Activated CD4-positive, alpha-beta memory T cell treated with anti-CD3 and anti-CD28 coated beads, Interleukin-2, amount 10 ng/mL, durations not matched to agents 7 days and 5 days (primary cell): ENCODE measurements at regions of chr19 and their contacts with region 1.

Region 1: GRCh38 chr19:13952154-13953035 is at the start of gene DCAF15:
- DNase-seq: peak; percentile 99
- H3K4me3 Mint-ChIP-seq: peak within 1 kb of the TSS; percentile 95
- H3K27ac Mint-ChIP-seq: peak within 1 kb of the TSS; percentile 85
- H3K4me1 Mint-ChIP-seq: peaks cover 19% of the 10 kb centered on the region
- H3K27me3 Mint-ChIP-seq: no peaks in the 10 kb centered on the region
- total RNA-seq, gene DCAF15: 76.2 to 78.4 TPM

Region 2: GRCh38 chr19:13804830-13805683 is 147.3 kb before region 1 on chr19:
- CTCF ChIA-PET with region 1: no interaction called
- POLR2A ChIA-PET with region 1: no interaction called
- DNase-seq: no peak
- H3K4me3 Mint-ChIP-seq: no peak overlapping the region
- H3K27ac Mint-ChIP-seq: no peak overlapping the region
- H3K4me1 Mint-ChIP-seq: no peaks in the 10 kb centered on the region
- H3K27me3 Mint-ChIP-seq: no peaks in the 10 kb centered on the region

Region 3: GRCh38 chr19:13894552-13894951 is 57.8 kb before region 1 on chr19:
- CTCF ChIA-PET with region 1: no interaction called
- POLR2A ChIA-PET with region 1: no interaction called
- DNase-seq: no peak
- H3K4me3 Mint-ChIP-seq: no peak overlapping the region
- H3K27ac Mint-ChIP-seq: no peak overlapping the region
- H3K4me1 Mint-ChIP-seq: no peaks in the 10 kb centered on the region
- H3K27me3 Mint-ChIP-seq: no peaks in the 10 kb centered on the region

Region 4: GRCh38 chr19:13926715-13927114 is 25.7 kb before region 1 on chr19:
- CTCF ChIA-PET with region 1: no interaction called
- POLR2A ChIA-PET with region 1: no interaction called
- DNase-seq: no peak
- H3K4me3 Mint-ChIP-seq: no peak overlapping the region
- H3K27ac Mint-ChIP-seq: peak overlapping the region; percentile 40
- H3K4me1 Mint-ChIP-seq: peaks cover 12% of the 10 kb centered on the region
- H3K27me3 Mint-ChIP-seq: no peaks in the 10 kb centered on the region

Region 5: GRCh38 chr19:13962699-13963602 is 10.6 kb after region 1 on chr19:
- CTCF ChIA-PET with region 1: no interaction called
- POLR2A ChIA-PET with region 1: interaction called, 11 read pairs
- DNase-seq: no peak
- H3K4me3 Mint-ChIP-seq: no peak overlapping the region
- H3K27ac Mint-ChIP-seq: no peak overlapping the region
- H3K4me1 Mint-ChIP-seq: no peaks in the 10 kb centered on the region
- H3K27me3 Mint-ChIP-seq: no peaks in the 10 kb centered on the region

Region 6: DNA sequence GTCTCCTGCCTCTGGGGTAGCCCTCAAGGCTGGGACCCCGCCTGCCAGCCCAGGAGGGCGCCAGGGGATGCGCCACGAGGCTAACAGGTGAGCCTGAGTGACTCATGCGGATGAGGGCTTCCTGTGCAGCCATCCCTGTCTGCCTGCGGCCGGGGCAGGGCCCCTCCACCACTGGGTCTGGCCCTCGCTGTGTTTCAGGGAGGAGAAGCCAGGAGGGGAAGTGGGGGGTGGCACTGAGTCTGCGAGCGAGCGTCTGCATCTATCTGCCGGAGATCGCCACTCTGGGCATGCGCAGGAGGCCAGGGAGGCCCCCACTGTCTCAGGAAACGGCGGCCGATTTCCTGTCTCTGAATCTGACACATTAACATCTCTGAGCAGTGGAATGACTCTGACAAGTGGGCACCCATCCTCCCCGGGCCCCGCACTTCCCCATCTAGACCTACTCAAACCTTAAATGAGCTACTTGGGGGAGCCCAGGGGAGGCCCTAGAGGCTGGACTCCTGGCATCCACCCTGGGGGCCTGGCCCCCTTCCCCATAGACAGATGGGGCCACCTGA is 34.0 kb after region 1 on chr19:
- CTCF ChIA-PET with region 1: interaction called, 3 read pairs
- POLR2A ChIA-PET with region 1: interaction called, 31 read pairs
- DNase-seq: peak; percentile 99
- H3K4me3 Mint-ChIP-seq: peak overlapping the region; percentile 59
- H3K27ac Mint-ChIP-seq: peak overlapping the region; percentile 98
- H3K4me1 Mint-ChIP-seq: peaks cover 77% of the 10 kb centered on the region
- H3K27me3 Mint-ChIP-seq: no peaks in the 10 kb centered on the region

Region 7: DNA sequence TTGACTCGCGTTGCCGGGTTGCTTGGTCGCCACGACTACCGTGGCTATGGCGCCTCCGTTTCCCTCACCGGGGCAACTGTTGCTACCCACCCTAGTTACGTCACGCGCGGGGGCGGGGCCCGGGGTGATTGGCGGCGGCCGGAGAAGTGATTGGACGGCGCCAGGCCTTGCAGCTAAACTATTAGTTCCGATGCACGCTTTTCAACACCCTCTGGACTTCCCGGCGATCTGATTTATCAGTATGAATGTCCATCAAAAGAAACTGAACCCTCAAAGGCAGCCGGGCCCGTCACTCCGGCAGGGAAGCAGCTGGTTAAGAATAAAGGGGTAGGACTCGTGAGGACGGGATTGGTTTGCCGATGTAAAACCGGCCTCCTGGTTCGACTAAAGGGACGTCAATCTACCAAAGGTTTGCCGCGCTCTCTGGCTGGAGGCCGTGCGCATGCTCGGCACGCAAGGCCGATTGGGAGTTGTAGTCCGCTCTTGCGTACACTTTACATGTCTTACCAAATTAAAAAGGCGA is 53.9 kb after region 1 on chr19 and contains the start of gene RFX1:
- CTCF ChIA-PET with region 1: interaction called, 4 read pairs
- POLR2A ChIA-PET with region 1: interaction called, 58 read pairs
- DNase-seq: peak; percentile 100
- H3K4me3 Mint-ChIP-seq: peak within 1 kb of the TSS; percentile 84
- H3K27ac Mint-ChIP-seq: peak within 1 kb of the TSS; percentile 93
- H3K4me1 Mint-ChIP-seq: peaks cover 41% of the 10 kb centered on the region
- H3K27me3 Mint-ChIP-seq: no peaks in the 10 kb centered on the region
- total RNA-seq, gene RFX1: 16.8 to 18.6 TPM

Region 8: DNA sequence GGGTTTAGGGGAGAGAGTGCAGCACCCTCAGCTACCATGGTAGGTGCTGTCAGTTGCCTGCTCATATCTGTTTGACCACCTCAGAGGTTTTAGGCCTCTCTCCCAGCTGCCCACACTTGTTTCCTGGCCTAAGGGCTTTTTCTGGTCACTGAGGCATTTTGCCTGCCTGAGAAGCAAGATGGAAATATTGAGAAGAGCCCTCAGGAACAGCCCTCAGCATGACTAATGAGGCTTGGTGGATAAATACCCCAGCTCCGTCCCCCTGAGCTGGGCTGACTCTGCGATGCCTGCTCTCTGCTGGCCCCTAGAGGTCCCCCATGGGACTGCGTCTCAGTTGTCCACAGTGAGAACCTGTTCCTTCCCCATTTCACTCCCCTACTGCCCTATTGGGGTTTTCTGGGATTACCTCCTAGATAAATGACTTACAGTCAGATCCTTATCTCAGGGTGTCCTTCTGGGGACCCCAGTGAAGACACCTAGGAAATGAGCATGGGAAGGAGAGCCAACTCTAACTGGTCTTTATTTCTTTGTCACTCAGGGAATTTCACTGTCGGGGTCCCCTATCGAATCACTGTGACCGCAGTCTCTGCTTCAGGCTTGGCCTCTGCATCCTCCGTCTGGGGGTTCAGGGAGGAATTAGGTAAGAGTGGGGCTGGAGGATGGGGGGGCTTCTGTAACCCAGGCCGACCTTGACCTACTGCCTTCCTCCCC is 96.2 kb after region 1 on chr19:
- CTCF ChIA-PET with region 1: interaction called, 11 read pairs
- POLR2A ChIA-PET with region 1: no interaction called
- DNase-seq: peak; percentile 75
- H3K4me3 Mint-ChIP-seq: no peak overlapping the region
- H3K27ac Mint-ChIP-seq: no peak overlapping the region
- H3K4me1 Mint-ChIP-seq: peaks cover 2% of the 10 kb centered on the region
- H3K27me3 Mint-ChIP-seq: no peaks in the 10 kb centered on the region

Region 9: DNA sequence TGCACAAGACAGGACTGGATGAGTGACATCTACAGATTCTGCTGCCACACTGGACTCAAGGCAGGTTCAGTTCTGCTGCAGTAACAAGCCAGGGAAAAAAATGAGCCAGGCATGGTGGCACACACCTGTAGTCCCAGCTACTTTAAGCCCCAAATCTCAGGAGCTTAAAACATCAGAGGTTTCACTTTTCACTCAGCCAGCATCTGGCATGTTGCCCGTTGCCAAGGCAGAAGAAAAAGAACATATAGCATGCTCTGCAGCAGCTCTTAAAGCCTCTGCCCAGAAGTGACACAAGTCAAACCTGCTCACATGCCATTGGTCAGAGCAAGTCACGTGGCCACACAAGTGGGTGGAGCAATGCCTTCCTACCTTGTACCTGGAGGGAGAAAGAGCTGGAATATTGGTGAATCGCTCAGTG is 414.1 kb after region 1 on chr19:
- CTCF ChIA-PET with region 1: no interaction called
- POLR2A ChIA-PET with region 1: no interaction called
- DNase-seq: peak; percentile 90
- H3K4me3 Mint-ChIP-seq: peak overlapping the region; percentile 61
- H3K27ac Mint-ChIP-seq: peak overlapping the region; percentile 89
- H3K4me1 Mint-ChIP-seq: peaks cover 73% of the 10 kb centered on the region
- H3K27me3 Mint-ChIP-seq: no peaks in the 10 kb centered on the region